Brain microvascular endothelial cell (primary cell): ENCODE measurements at regions of chr6 and their contacts with region 1.

Region 1: DNA sequence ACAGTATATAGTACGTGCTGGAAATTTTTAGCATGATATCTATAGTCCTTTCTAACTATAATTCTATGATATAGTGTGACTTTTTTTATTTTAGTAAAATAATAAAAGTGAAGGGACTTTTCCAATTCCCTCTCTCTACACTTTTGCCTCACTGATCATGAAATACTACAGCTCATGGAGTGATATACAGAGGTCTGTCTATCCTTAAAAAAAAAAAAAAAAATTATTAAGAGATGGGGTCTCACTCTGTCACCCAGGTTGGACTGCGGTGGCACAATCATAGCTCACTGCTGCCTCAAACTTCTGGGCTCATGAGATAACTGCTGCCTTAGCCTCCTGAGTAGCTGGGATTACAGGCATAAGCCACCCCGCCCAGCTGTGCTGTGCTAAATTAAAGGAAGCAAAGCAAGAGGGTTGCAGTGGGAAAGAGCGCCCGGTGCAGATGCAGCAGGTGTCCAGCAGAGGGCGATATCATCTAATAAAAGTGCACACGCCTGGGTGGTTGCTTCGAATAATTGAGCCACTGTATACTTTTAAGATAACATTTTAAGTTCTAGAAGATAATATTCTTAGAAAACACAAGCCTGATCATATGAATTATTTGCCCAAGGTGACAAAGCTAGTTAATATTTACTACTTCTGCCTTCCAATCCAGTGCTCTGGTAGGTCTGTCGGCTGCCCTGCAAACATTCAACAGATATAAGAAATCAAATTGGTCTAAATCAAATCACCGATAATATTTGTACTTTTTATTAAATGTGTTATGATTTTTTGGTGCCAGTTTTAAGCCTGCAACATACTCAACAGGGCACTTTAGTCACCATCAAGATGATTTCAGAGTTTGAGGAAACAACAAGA is 94.9 kb upstream of the NT5E start:
- DNase-seq: peak; percentile 74
- H3K4me3 ChIP-seq: no peak overlapping the region
- H3K27ac ChIP-seq: no peak overlapping the region
- H3K27me3 ChIP-seq: no peaks in the 10 kb centered on the region
- CTCF ChIP-seq: peak; percentile 93

Region 2: DNA sequence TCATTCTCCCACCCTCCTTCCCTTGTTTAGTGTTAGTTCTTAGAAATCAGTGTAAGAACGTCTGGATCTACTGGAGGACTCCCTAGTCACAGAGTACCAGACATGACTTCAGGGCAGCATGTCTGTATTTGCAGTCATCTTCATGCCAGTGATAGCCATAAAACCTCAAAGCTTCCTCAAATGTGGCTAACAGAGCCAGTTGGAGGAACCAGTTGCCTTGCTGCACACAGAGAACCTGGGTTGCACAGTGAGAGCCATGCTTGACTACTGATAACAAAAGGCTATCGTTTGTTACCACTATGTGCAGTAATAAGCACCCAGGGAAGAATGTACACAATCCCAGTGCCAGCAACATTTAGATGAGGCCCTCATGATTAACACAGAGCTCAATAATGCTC is 115.0 kb after region 1 on chr6:
- in situ Hi-C with region 1: loop called (anchors 10 kb)
- DNase-seq: peak; percentile 43
- H3K4me3 ChIP-seq: no peak overlapping the region
- H3K27ac ChIP-seq: peak overlapping the region; percentile 23
- H3K27me3 ChIP-seq: no peaks in the 10 kb centered on the region
- CTCF ChIP-seq: no peak

Region 3: GRCh38 chr6:85650606-85651005 is 295.6 kb after region 1 on chr6:
- in situ Hi-C with region 1: no loop called
- DNase-seq: no peak
- H3K4me3 ChIP-seq: no peak overlapping the region
- H3K27ac ChIP-seq: no peak overlapping the region
- H3K27me3 ChIP-seq: no peaks in the 10 kb centered on the region
- CTCF ChIP-seq: no peak